Spleen (tissue), 13 donors: ENCODE measurements at regions of chr6 and their contacts with region 1.

Region 1: DNA sequence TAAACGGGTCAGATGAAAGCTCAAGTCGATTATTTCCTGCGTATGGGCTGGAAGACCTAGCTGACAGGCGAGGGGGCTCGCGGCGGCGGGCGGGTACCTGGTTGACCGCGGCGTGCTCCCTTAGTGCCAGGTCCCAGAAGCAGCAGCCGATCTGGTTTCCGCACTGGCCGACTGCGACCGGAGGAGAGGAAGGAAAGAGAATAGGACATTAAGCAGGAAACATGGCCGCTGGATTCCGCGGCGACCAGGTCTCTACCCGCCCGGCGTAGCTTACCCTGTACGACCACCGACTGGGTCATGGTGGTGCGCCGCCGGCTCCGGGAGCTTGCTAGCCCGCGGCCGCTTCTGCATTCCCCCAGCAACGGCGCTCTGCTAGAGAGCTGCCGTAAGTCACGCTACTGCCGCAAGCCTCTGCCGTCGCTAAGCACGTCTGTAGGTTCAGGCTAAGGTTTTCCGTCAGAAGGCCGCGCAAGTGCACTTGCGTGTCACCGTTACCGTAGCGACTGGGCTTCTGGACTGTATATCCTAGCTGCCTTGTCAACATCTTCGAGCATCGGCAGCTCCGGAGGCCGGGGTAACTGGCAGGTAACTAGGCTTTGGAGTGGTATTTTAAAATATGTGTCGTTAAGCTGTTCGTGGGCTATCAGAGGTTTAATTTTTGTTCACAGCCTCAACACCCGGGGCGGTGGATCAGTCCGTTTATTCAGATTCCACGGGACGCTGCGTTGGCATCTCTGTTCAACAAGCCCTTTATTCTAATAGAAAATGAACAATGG is at the starts of genes FAM229B and TUBE1:
- DNase-seq: peak; percentile 98
- H3K4me3 ChIP-seq: peak within 1 kb of the TSS; percentile 68 to 89 (median 82)
- H3K27ac ChIP-seq: peak within 1 kb of the TSS; percentile 72 to 91 (median 86)
- H3K4me1 ChIP-seq: peaks cover 5 to 27% (median 19%) of the 10 kb centered on the region in 6 donors
- H3K27me3 ChIP-seq: no peaks in the 10 kb centered on the region
- CTCF ChIP-seq: peak in 4 of 11 experiments; percentile 14 to 33 (median 27)
- POLR2A ChIP-seq: peak in 2 of 3 donors; percentile 30 to 65
- total RNA-seq, gene FAM229B: 1.9 to 7.8 (median 3.6) TPM
- total RNA-seq, gene TUBE1: 12.4 to 35.1 (median 16.8) TPM

Region 2: GRCh38 chr6:111024681-111025080 is 1062.6 kb before region 1 on chr6:
- intact Hi-C with region 1: no loop called
- DNase-seq: no peak
- H3K4me3 ChIP-seq: no peak overlapping the region
- H3K27ac ChIP-seq: no peak overlapping the region
- H3K4me1 ChIP-seq: no peaks in the 10 kb centered on the region
- H3K27me3 ChIP-seq: no peaks in the 10 kb centered on the region
- CTCF ChIP-seq: no peak
- POLR2A ChIP-seq: no peak

Region 3: DNA sequence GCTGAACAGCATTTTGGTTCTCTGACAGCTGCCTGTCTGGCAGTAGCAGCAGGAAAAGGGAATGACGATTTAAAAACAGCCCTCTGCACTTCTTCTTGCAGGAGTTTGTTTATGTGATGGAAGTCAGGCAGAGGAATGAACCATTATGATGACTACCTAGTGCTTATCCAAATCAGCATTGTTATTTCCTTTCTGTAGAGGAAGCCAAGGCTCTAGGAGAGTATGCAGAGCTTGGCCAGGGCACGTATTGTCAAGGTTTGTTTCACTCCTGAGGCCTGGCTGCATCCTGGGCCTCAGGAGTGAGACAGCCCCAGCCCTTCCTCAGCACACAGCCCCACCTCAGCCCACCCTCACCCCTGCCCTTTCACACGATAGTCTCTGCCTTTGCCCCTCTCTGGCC is 68.6 kb after region 1 on chr6:
- intact Hi-C with region 1: loop called (anchors 5 kb)
- DNase-seq: no peak
- H3K4me3 ChIP-seq: no peak overlapping the region
- H3K27ac ChIP-seq: peak overlapping the region in 5 of 8 donors; percentile 7 to 61 (median 22)
- H3K4me1 ChIP-seq: peaks cover 0 to 10% (median 2%) of the 10 kb centered on the region in 6 donors
- H3K27me3 ChIP-seq: peaks cover 0 to 11% (median 0%) of the 10 kb centered on the region in 7 donors
- CTCF ChIP-seq: no peak
- POLR2A ChIP-seq: no peak

Region 4: GRCh38 chr6:112409311-112409710 is 322.0 kb after region 1 on chr6:
- intact Hi-C with region 1: no loop called
- DNase-seq: no peak
- H3K4me3 ChIP-seq: no peak overlapping the region
- H3K27ac ChIP-seq: no peak overlapping the region
- H3K4me1 ChIP-seq: no peaks in the 10 kb centered on the region
- H3K27me3 ChIP-seq: peaks cover 0 to 8% (median 0%) of the 10 kb centered on the region in 7 donors
- CTCF ChIP-seq: no peak
- POLR2A ChIP-seq: no peak